Heart right ventricle (tissue), 16 donors: ENCODE measurements at regions of chr15 and their contacts with region 1.

Region 1: DNA sequence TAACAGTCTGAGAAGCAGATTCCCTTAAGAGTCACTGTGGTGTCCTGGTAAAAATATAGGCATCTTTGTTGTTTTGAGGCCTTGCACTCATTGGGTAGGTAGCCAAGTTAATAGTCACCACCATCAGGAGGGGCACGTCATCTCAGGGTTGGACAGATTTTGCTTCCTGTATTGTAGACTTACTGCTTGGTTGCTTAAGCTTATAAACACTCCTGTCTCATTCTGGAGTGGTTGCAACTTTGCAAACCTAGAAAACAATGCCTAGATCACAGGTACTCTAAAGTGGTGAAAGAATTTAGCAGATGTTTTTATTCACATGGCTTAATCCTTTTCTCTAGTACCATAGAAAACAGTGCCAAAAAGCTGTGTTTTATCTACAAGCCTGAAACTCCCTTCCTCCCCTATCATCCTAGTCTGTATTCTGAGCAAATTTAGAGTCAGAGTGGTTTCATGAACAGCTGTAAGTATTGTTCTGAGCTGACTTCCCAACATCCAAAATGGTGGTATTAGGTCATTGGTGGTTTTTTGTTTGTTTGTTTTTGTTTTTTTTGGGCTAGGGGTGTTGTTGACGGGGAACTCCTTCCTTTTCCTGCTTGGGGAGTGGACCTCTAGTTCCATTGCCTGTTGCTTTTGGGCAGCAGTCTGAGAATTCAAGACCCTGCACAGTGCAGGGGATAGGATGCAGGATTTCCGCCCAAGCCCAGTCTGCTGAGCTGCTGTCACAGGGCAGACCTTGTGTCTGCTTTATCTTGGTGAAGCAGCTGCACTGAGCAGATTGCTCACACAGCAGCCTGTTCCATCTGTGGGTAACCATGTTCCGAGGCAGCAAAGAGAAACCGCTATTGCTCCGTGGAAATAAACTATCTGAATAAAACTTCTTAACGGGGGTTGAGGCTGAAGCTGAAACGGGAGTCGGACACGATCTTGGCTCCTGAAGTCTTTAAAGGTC is 202.0 kb downstream of the AKAP13 start:
- DNase-seq: peak; percentile 40 to 81
- ATAC-seq: peak; percentile 57 to 80 (median 68)
- H3K4me3 ChIP-seq: peak overlapping the region; percentile 28 to 65 (median 52)
- H3K27ac ChIP-seq: peak overlapping the region; percentile 73 to 93 (median 90)
- H3K4me1 ChIP-seq: peaks cover 46 to 99% (median 82%) of the 10 kb centered on the region in 9 donors
- H3K27me3 ChIP-seq: no peaks in the 10 kb centered on the region
- CTCF ChIP-seq: no peak

Region 2: DNA sequence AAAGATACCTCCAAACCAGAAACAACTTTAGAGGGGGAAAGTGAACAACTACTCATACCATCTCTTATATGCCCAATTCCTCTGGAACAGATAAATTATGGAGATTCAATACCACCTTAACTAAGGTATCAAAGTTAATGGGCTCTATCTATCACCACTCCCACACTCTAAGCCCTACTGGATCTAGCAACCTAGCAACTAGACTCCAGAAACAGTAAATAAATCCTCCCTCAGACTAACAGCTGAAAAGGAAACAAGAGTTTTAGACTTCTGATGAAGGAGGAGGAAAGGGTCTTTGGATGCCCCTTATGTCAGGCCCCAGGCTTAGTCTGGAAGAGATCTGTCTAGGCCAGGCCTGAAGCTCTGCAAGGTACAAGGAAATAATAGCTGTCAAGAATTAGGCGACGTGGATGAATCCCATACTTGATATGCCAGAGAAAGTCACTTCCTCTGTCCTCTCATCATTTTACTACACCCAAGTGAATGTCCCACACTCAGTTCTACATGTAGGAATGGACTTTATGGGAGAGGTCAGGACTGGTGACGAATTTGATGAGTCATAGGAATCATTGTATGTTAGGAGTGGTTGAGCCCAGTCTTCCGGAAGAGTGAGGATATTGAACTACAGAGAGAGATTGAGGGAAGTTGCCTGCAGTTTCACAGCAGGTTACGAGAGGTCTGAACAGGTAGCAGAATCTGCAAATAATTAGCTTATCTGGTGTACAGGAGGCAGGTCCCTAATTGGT is 88.2 kb before region 1 on chr15:
- intact Hi-C with region 1: loop called in 4 of 10 experiments (anchors 5 to 10 kb)
- DNase-seq: no peak
- ATAC-seq: peak in 7 of 8 donors; percentile 68 to 92 (median 78)
- H3K4me3 ChIP-seq: no peak overlapping the region
- H3K27ac ChIP-seq: peak overlapping the region in 9 of 10 donors; percentile 13 to 66 (median 55)
- H3K4me1 ChIP-seq: peaks cover 10 to 91% (median 86%) of the 10 kb centered on the region in 9 donors
- H3K27me3 ChIP-seq: no peaks in the 10 kb centered on the region
- CTCF ChIP-seq: no peak

Region 3: DNA sequence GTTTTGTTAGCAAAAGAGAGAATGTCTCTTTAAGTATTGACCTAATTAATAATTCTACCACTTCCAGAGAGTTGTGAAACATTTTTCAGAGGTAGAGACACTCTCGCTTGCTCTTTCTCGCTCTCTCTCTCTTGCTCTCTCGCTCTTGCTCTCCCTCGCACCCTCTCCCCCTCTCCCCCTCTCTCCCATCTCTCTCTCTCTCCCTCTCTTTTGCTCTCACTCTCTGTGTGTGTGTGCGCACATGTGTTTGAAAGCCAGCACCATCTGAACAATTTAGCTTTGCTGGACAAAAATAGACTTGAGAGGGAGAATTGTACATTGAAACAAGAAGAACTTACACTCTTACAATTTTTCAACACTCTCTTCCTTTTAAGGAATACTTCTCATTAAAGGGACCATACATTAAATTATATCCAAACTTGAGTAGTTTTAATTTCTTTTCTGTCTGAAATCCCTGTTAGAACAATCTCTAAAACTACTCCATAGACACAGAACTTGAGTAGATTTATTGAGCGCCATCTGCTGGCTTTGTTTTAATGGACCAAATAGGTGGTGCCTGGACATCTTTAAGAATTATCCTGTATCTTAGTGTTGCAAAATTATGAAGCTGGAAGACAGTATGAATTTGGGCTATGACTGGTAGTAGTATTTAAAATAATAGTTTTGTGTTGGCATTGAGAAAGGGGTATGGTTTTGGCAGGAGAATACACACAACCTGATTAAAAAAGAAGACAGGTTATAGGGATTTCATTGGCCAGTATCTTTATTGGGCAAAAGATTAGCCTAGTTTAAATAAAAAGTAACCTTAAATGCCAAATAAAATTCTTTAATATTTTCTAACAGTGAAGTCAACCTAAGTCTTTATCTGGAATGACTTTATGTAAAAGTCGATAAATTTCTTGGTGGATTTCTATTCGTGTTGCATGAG is 77.4 kb before region 1 on chr15:
- intact Hi-C with region 1: loop called in 2 of 10 experiments (anchors 5 kb)
- DNase-seq: peak in 1 of 2 donors; percentile 72
- ATAC-seq: peak; percentile 35 to 68 (median 57)
- H3K4me3 ChIP-seq: no peak overlapping the region
- H3K27ac ChIP-seq: peak overlapping the region in 9 of 10 donors; percentile 9 to 90 (median 44)
- H3K4me1 ChIP-seq: peaks cover under 1 to 94% (median 39%) of the 10 kb centered on the region in 9 donors
- H3K27me3 ChIP-seq: no peaks in the 10 kb centered on the region
- CTCF ChIP-seq: peak; percentile 36 to 79 (median 63)

Region 4: DNA sequence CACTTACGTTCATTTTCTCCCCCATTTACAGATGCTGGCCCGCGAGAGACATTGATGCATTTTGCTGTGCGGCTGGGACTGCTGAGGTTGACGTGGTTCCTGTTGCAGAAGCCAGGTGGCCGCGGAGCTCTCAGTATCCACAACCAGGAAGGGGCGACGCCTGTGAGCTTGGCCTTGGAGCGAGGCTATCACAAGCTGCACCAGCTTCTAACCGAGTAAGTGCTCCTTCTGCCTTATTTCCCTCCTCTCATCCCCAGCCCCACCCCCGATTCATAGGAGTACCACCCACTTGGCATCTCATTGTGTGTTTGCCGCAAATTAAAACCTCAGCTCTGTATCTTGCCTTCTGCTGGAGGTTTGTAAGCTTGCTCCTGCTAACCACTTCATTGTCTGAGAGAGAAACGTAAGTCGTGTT is 38.7 kb before region 1 on chr15:
- intact Hi-C with region 1: loop called in 2 of 10 experiments (anchors 5 kb)
- DNase-seq: peak; percentile 58 to 77
- ATAC-seq: peak; percentile 52 to 81 (median 70)
- H3K4me3 ChIP-seq: peak overlapping the region in 6 of 10 donors; percentile 4 to 34 (median 14)
- H3K27ac ChIP-seq: peak overlapping the region in 9 of 10 donors; percentile 21 to 90 (median 56)
- H3K4me1 ChIP-seq: peaks cover 10 to 80% (median 65%) of the 10 kb centered on the region in 9 donors
- H3K27me3 ChIP-seq: no peaks in the 10 kb centered on the region
- CTCF ChIP-seq: peak in 7 of 9 donors; percentile 21 to 59 (median 37)

Region 5: DNA sequence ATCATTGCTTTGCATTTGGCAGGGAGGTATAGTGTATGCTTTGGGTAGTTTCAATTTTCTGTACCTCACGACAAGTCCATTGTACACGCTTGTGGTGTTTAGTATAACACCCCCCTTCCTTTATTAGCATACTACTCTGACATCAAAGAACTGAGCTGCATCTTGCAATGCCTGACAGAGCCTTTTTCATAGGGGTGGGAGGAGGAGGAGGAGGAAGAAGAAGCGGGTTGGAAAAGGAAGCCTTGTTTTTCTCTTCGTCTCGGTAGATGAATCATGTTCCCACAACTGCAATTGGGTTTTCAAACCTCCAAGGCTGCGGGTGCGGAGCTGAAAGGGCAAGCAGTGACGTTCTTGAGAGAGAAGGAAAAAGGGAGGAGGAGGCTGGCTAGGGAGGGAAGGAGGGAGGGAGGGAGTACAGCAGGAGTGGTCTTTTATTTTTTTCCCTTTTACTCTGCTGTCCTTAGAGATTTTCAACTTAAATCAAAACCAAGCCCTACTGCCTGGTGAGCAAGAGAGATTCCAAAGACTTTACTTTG is 36.6 kb after region 1 on chr15:
- intact Hi-C with region 1: loop called in 4 of 10 experiments (anchors 5 kb)
- DNase-seq: peak; percentile 59 to 86
- ATAC-seq: peak; percentile 65 to 84 (median 77)
- H3K4me3 ChIP-seq: peak overlapping the region; percentile 16 to 63 (median 53)
- H3K27ac ChIP-seq: peak overlapping the region; percentile 63 to 93 (median 83)
- H3K4me1 ChIP-seq: peaks cover 20 to 100% (median 98%) of the 10 kb centered on the region in 9 donors
- H3K27me3 ChIP-seq: no peaks in the 10 kb centered on the region
- CTCF ChIP-seq: no peak

Region 6: DNA sequence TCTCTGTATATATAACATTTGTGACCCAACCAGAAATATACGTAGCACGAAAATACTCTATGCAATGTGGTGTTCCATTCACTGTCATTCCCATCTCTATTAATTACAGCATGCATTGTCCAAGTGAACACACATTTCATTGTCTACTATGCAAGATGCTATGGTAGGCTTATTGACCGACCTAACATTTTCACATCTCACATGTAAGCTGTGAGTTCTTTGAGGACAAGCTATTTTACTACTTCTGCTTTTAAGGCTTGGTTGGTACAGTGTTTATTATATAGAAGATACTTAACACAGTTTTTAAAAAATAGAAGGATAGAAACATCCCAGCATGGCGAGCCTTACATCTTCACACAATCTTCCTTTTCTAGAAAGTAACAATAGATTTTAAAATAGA is 47.9 kb after region 1 on chr15:
- intact Hi-C with region 1: no loop called
- DNase-seq: no peak
- ATAC-seq: no peak
- H3K4me3 ChIP-seq: no peak overlapping the region
- H3K27ac ChIP-seq: peak overlapping the region in 3 of 10 donors; percentile 20 to 41 (median 29)
- H3K4me1 ChIP-seq: peaks cover 10 to 97% (median 72%) of the 10 kb centered on the region in 9 donors
- H3K27me3 ChIP-seq: no peaks in the 10 kb centered on the region
- CTCF ChIP-seq: no peak

Region 7: DNA sequence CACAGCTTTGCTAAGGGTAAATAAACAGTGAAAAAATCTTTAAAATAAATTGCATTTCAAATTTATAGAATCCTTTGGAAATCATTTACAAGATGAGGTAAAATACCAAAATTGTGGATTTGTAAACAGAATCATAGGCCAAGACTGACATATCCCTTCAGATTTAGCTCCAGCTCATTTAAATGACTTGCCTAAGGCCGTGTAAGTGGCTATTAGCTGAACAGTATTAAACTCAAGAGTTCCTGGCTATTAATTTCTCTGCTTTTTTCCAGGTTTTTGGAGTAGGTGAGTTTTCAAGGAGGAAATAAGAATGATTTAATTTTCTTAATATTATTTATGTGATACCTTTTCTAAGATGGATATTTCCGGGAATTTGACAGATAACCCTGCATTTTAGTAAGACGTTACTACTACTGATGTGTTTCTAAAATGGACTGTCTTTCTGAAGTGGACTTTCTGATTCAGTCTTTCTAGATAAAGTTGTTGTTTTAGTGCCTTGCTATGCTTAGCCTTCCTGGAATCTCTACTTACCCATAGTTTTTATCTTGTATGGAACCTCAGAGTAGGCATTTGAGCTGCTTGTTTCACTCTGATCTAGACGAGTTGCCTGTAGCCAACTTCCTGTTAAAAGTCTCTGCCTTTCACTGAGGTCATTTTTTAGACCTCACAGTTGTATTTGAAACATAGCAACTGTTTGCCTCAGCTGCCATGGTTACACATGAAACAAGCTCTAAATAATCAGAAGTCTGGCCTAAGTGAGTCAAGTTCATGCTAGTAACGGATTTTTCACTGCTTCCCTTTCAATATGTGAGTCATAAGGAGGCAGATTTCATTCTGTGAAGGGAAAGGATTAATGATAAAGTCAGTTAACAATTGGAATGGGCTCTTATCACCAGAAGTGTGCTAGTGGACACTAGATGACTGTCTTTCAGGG is 85.4 kb after region 1 on chr15:
- intact Hi-C with region 1: no loop called
- DNase-seq: peak in 1 of 2 donors; percentile 83
- ATAC-seq: peak; percentile 74 to 97 (median 89)
- H3K4me3 ChIP-seq: no peak overlapping the region
- H3K27ac ChIP-seq: peak overlapping the region; percentile 4 to 91 (median 84)
- H3K4me1 ChIP-seq: peaks cover 9 to 64% (median 46%) of the 10 kb centered on the region in 9 donors
- H3K27me3 ChIP-seq: no peaks in the 10 kb centered on the region
- CTCF ChIP-seq: no peak

Region 8: GRCh38 chr15:85707519-85708338 is 125.3 kb after region 1 on chr15:
- intact Hi-C with region 1: loop called in 1 of 10 experiments (anchors 5 kb)
- DNase-seq: peak in 1 of 2 donors; percentile 60
- ATAC-seq: peak in 7 of 8 donors; percentile 6 to 65 (median 54)
- H3K4me3 ChIP-seq: peak overlapping the region in 7 of 10 donors; percentile 1 to 35 (median 23)
- H3K27ac ChIP-seq: peak overlapping the region; percentile 81 to 91 (median 86)
- H3K4me1 ChIP-seq: peaks cover 38 to 76% (median 63%) of the 10 kb centered on the region in 9 donors
- H3K27me3 ChIP-seq: no peaks in the 10 kb centered on the region
- CTCF ChIP-seq: no peak